Cardiac septum (tissue), 1 donor: ENCODE measurements at regions of chr2 and their contacts with region 1.

Region 1: GRCh38 chr2:219218732-219219701 is at the start of gene ABCB6:
- DNase-seq: peak; percentile 98
- total RNA-seq, gene ABCB6: 17.4 TPM

Region 2: DNA sequence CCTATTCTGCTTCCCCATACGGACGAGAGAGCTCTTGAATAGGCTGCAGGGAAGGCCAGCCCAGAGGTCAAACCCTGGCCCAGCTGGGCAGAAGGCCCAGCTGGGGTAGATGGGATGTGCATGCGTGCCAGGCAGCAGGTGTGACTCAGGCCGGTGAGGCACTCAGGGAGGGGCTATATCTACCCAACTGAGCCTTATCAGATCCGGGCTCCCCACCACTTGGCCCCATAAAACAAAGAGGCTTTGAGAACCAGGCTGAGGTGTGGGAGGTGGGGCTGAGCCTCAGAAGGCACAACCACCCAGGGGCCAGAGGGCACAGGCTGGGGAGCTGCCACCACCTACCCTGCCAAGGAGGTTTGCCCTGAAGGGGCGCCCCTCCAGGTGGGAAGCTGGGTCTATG is 169.7 kb before region 1 on chr2:
- intact Hi-C with region 1: no loop called
- DNase-seq: peak; percentile 38

Region 3: GRCh38 chr2:219229305-219230058 is 10.5 kb after region 1 on chr2 and contains the starts of genes ANKZF1 and ATG9A:
- intact Hi-C with region 1: loop called (anchors 1 kb)
- DNase-seq: peak; percentile 100
- total RNA-seq, gene ANKZF1: 22.4 TPM
- total RNA-seq, gene ATG9A: 66.3 TPM

Region 4: DNA sequence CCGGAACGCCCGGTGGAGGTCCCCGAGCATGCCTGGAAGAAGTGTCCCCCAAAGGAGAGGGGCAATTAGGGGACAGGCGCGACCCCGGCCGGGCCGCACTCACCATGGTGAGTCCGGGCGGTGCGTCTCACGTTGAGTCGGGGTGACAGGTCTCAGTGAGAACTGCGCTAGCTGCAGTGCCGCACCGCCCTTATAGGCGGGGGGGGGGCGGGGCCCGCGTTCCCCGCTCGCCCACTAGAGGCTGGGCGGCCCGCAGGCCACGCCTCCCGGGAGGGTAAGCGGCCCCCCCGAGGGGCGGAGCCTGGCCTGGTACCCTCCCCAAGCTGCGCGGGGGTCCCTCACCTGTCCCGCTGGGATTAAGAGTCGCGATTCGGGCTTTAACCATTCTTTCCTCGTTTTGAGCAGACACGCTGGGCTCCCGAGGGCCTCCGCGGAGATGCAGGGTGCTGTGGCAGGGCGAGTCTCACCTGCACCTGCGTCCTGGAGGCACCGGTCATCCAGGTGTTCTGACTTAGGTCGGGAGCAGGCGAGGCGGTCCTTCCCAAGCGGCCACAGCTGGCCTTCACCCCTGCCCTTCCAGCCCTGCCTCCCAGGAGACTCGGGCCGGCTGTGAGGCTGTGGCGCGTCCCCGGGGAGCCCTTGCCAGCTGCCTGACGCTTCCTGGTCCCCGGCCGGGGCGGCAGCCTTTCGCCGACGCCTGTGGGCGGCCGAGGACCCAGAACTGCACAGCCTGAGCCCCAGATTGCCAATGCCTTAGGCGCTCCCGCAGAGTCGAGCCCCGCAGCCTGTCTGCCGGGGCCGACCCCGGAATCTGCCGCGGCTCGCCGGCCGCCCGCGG is 35.0 kb after region 1 on chr2 and contains the start of gene TUBA4A:
- intact Hi-C with region 1: loop called (anchors 2 kb)
- DNase-seq: peak; percentile 95
- total RNA-seq, gene TUBA4A: 164 TPM